CD8-positive, alpha-beta memory T cell (primary cell): ENCODE measurements at regions of chr16 and their contacts with region 1.

Region 1: GRCh38 chr16:12067714-12068401 is 91.3 kb downstream of the SNX29 start:
- DNase-seq: peak in 4 of 5 donors; percentile 17 to 70 (median 60)
- H3K4me3 ChIP-seq: no peak overlapping the region
- H3K4me3 Mint-ChIP-seq: peak overlapping the region in 1 of 7 donors; percentile 40
- H3K27ac ChIP-seq: no peak overlapping the region
- H3K27ac Mint-ChIP-seq: peak overlapping the region in 3 of 8 donors; percentile 9 to 17 (median 10)
- H3K4me1 ChIP-seq: peaks cover 6% of the 10 kb centered on the region
- H3K4me1 Mint-ChIP-seq: peaks cover 5 to 6% (median 6%) of the 10 kb centered on the region in 3 donors
- H3K27me3 ChIP-seq: no peaks in the 10 kb centered on the region
- H3K27me3 Mint-ChIP-seq: no peaks in the 10 kb centered on the region

Region 2: GRCh38 chr16:11407047-11407982 is 660.5 kb before region 1 on chr16:
- CTCF ChIA-PET with region 1: interaction called, 11 read pairs
- POLR2A ChIA-PET with region 1: no interaction called
- DNase-seq: peak; percentile 35 to 69 (median 61)
- H3K4me3 ChIP-seq: no peak overlapping the region
- H3K4me3 Mint-ChIP-seq: no peak overlapping the region
- H3K27ac ChIP-seq: no peak overlapping the region
- H3K27ac Mint-ChIP-seq: peak overlapping the region in 1 of 8 donors; percentile 50
- H3K4me1 ChIP-seq: no peaks in the 10 kb centered on the region
- H3K4me1 Mint-ChIP-seq: peaks cover 0 to 3% (median 0%) of the 10 kb centered on the region in 3 donors
- H3K27me3 ChIP-seq: no peaks in the 10 kb centered on the region
- H3K27me3 Mint-ChIP-seq: peaks cover 0 to 3% of the 10 kb centered on the region in 2 donors

Region 3: GRCh38 chr16:11949527-11949926 is 118.3 kb before region 1 on chr16:
- CTCF ChIA-PET with region 1: interaction called, 18 read pairs
- POLR2A ChIA-PET with region 1: no interaction called
- DNase-seq: no peak
- H3K4me3 ChIP-seq: no peak overlapping the region
- H3K4me3 Mint-ChIP-seq: no peak overlapping the region
- H3K27ac ChIP-seq: no peak overlapping the region
- H3K27ac Mint-ChIP-seq: no peak overlapping the region
- H3K4me1 ChIP-seq: no peaks in the 10 kb centered on the region
- H3K4me1 Mint-ChIP-seq: no peaks in the 10 kb centered on the region
- H3K27me3 ChIP-seq: no peaks in the 10 kb centered on the region
- H3K27me3 Mint-ChIP-seq: no peaks in the 10 kb centered on the region

Region 4: GRCh38 chr16:12079412-12079965 is 11.6 kb after region 1 on chr16:
- CTCF ChIA-PET with region 1: interaction called, 33 read pairs
- POLR2A ChIA-PET with region 1: no interaction called
- DNase-seq: peak in 2 of 5 donors; percentile 24 to 54
- H3K4me3 ChIP-seq: peak overlapping the region; percentile 1
- H3K4me3 Mint-ChIP-seq: peak overlapping the region; percentile 55 to 92 (median 64)
- H3K27ac ChIP-seq: peak overlapping the region; percentile 25
- H3K27ac Mint-ChIP-seq: peak overlapping the region; percentile 76 to 97 (median 92)
- H3K4me1 ChIP-seq: peaks cover 68% of the 10 kb centered on the region
- H3K4me1 Mint-ChIP-seq: peaks cover 61 to 82% (median 73%) of the 10 kb centered on the region in 3 donors
- H3K27me3 ChIP-seq: no peaks in the 10 kb centered on the region
- H3K27me3 Mint-ChIP-seq: no peaks in the 10 kb centered on the region

Region 5: GRCh38 chr16:12095275-12096156 is 27.7 kb after region 1 on chr16:
- CTCF ChIA-PET with region 1: interaction called, 31 read pairs
- POLR2A ChIA-PET with region 1: no interaction called
- DNase-seq: peak; percentile 34 to 63 (median 56)
- H3K4me3 ChIP-seq: peak overlapping the region; percentile 6
- H3K4me3 Mint-ChIP-seq: peak overlapping the region; percentile 1 to 84 (median 66)
- H3K27ac ChIP-seq: no peak overlapping the region
- H3K27ac Mint-ChIP-seq: peak overlapping the region in 5 of 8 donors; percentile 4 to 74 (median 39)
- H3K4me1 ChIP-seq: peaks cover 10% of the 10 kb centered on the region
- H3K4me1 Mint-ChIP-seq: peaks cover 9 to 20% (median 14%) of the 10 kb centered on the region in 3 donors
- H3K27me3 ChIP-seq: no peaks in the 10 kb centered on the region
- H3K27me3 Mint-ChIP-seq: no peaks in the 10 kb centered on the region